Activated CD4-positive, alpha-beta T cell treated with anti-CD3 and anti-CD28 coated beads, Interleukin-2, amount 10 ng/mL, durations not matched to agents 24 days and 14 days (primary cell): ENCODE measurements at regions of chr5 and their contacts with region 1.

Region 1: GRCh38 chr5:61331407-61332357 is at the start of gene ZSWIM6:
- DNase-seq: peak; percentile 99
- H3K4me3 Mint-ChIP-seq: peak within 1 kb of the TSS; percentile 94
- H3K27ac Mint-ChIP-seq: peak within 1 kb of the TSS; percentile 97
- H3K4me1 Mint-ChIP-seq: peaks cover 42% of the 10 kb centered on the region
- H3K27me3 Mint-ChIP-seq: peaks cover 48% of the 10 kb centered on the region
- total RNA-seq, gene ZSWIM6: 7.4 and 7.9 TPM in 2 replicates

Region 2: DNA sequence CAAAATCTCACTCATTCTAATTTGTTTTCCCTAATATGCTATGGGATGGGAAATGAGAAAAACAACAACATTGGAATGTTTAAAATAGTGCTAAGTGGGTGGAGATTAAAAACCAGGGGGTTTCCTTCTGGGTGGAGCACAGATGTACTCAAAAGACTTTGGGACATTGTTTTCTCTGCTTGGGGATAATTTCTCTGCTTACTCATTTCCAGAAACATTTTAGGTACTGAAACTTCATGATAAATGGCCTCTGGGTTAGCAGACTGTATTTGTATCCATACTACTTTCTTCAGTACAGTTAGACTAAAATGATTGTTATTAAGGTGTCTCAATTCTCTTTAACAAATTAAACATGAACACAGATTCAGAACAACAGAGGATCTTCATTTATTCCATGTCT is 505.0 kb before region 1 on chr5:
- intact Hi-C with region 1: loop called (anchors 10 kb)
- DNase-seq: no peak
- H3K4me3 Mint-ChIP-seq: no peak overlapping the region
- H3K27ac Mint-ChIP-seq: no peak overlapping the region
- H3K4me1 Mint-ChIP-seq: peaks cover 22% of the 10 kb centered on the region
- H3K27me3 Mint-ChIP-seq: no peaks in the 10 kb centered on the region

Region 3: GRCh38 chr5:61162010-61162831 is 169.5 kb before region 1 on chr5 and contains the start of gene SMIM15:
- intact Hi-C with region 1: loop called (anchors 1 kb)
- DNase-seq: peak; percentile 96
- H3K4me3 Mint-ChIP-seq: peak within 1 kb of the TSS; percentile 99
- H3K27ac Mint-ChIP-seq: peak within 1 kb of the TSS; percentile 99
- H3K4me1 Mint-ChIP-seq: peaks cover 32% of the 10 kb centered on the region
- H3K27me3 Mint-ChIP-seq: no peaks in the 10 kb centered on the region
- total RNA-seq, gene SMIM15: 82.9 and 92.8 TPM in 2 replicates

Region 4: GRCh38 chr5:61280205-61280604 is 51.5 kb before region 1 on chr5:
- intact Hi-C with region 1: loop called (anchors 2 kb)
- DNase-seq: peak; percentile 60
- H3K4me3 Mint-ChIP-seq: no peak overlapping the region
- H3K27ac Mint-ChIP-seq: no peak overlapping the region
- H3K4me1 Mint-ChIP-seq: peaks cover 24% of the 10 kb centered on the region
- H3K27me3 Mint-ChIP-seq: no peaks in the 10 kb centered on the region

Region 5: GRCh38 chr5:61408476-61409168 is 76.9 kb after region 1 on chr5:
- intact Hi-C with region 1: loop called (anchors 1 kb)
- DNase-seq: peak; percentile 98
- H3K4me3 Mint-ChIP-seq: peak overlapping the region; percentile 79
- H3K27ac Mint-ChIP-seq: peak overlapping the region; percentile 89
- H3K4me1 Mint-ChIP-seq: peaks cover 20% of the 10 kb centered on the region
- H3K27me3 Mint-ChIP-seq: peaks cover 16% of the 10 kb centered on the region

Region 6: GRCh38 chr5:61658592-61659008 is 326.9 kb after region 1 on chr5:
- intact Hi-C with region 1: loop called (anchors 1 kb)
- DNase-seq: peak; percentile 93
- H3K4me3 Mint-ChIP-seq: no peak overlapping the region
- H3K27ac Mint-ChIP-seq: no peak overlapping the region
- H3K4me1 Mint-ChIP-seq: no peaks in the 10 kb centered on the region
- H3K27me3 Mint-ChIP-seq: peaks cover 4% of the 10 kb centered on the region

Region 7: GRCh38 chr5:62412537-62413329 is 1081.1 kb after region 1 on chr5 and contains the start of gene IPO11:
- intact Hi-C with region 1: loop called (anchors 5 kb)
- DNase-seq: peak; percentile 100
- H3K4me3 Mint-ChIP-seq: peak within 1 kb of the TSS; percentile 93
- H3K27ac Mint-ChIP-seq: peak within 1 kb of the TSS; percentile 95
- H3K4me1 Mint-ChIP-seq: peaks cover 20% of the 10 kb centered on the region
- H3K27me3 Mint-ChIP-seq: peaks cover 9% of the 10 kb centered on the region
- total RNA-seq, gene IPO11: 56.7 and 60.9 TPM in 2 replicates